WTC11 (cell line): ENCODE measurements at regions of chr5 and their contacts with region 1.

Region 1: DNA sequence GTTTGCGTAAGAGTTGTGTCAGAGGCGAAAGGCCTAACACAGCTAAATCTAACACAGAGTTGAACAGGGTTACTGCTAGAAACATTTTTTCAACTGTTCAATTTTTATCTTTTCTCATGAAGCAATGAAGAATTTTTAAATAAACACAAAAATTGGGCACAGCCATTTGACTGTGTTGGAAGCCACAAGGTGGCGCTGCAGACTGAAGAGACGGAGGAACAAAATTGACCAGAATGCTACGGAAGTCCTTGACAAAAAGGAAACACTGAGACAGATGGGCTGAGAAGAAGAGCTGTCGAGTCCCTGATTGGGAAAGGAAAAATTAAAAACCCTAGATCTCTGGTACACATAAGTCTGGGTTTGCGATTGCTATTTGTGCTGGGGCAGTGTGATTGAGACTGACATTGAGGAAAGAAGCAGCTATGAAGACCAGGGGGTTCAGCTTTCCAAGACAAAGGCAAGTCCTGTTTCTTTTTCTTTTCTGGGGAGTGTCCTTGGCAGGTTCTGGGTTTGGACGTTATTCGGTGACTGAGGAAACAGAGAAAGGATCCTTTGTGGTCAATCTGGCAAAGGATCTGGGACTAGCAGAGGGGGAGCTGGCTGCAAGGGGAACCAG is at the start of gene PCDHB9:
- DNase-seq: peak; percentile 71
- ATAC-seq: peak; percentile 58
- H3K4me3 Mint-ChIP-seq: peak within 1 kb of the TSS; percentile 21
- H3K27ac Mint-ChIP-seq: no peak within 1 kb of the TSS; the same call in 1 of the 2 replicates
- H3K4me1 Mint-ChIP-seq: peaks cover 15% of the 10 kb centered on the region
- H3K27me3 Mint-ChIP-seq: peaks cover 4% of the 10 kb centered on the region; the same call in 1 of the 2 replicates
- CTCF ChIP-seq: peak; percentile 49; the same call in 1 of the 2 replicates
- total RNA-seq, gene PCDHB9: 1.6 to 2.3 TPM (median 1.7 TPM) in 3 replicates

Region 2: DNA sequence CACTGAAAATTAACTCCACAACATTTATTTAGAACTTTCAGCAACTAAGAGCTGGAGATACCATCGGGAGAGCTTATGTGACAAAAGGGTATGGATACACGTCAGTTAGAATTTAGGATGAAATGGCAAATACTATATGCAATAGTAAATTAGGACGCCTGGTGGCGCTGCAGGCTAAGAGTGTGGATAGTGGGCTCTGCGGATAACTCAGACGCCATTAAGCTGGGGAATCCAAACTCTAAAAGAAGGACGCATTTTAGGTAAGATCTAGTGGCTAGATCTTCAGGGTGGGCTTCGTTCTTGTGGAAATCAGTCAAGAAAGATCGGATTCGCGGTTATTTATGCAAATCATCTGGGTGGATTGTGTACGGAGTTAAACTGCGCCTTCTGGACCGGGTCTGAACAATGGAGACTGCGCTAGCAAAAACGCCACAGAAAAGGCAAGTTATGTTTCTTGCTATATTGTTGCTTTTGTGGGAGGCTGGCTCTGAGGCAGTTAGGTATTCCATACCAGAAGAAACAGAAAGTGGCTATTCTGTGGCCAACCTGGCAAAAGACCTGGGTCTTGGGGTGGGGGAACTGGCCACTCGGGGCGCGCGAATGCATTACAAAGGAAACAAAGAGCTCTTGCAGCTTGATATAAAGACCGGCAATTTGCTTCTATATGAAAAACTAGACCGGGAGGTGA is 51.8 kb before region 1 on chr5 and contains the start of gene PCDHB5:
- CTCF ChIA-PET with region 1: interaction called, 30 read pairs
- POLR2A ChIA-PET with region 1: no interaction called
- DNase-seq: peak; percentile 72
- ATAC-seq: peak; percentile 89
- H3K4me3 Mint-ChIP-seq: peak within 1 kb of the TSS; percentile 74
- H3K27ac Mint-ChIP-seq: peak within 1 kb of the TSS; percentile 64; the same call in 1 of the 2 replicates
- H3K4me1 Mint-ChIP-seq: peaks cover 4% of the 10 kb centered on the region; the same call in 1 of the 2 replicates
- H3K27me3 Mint-ChIP-seq: no peaks in the 10 kb centered on the region
- CTCF ChIP-seq: peak; percentile 72
- total RNA-seq, gene PCDHB5: 6.8 to 12.5 TPM (median 8.5 TPM) in 3 replicates

Region 3: DNA sequence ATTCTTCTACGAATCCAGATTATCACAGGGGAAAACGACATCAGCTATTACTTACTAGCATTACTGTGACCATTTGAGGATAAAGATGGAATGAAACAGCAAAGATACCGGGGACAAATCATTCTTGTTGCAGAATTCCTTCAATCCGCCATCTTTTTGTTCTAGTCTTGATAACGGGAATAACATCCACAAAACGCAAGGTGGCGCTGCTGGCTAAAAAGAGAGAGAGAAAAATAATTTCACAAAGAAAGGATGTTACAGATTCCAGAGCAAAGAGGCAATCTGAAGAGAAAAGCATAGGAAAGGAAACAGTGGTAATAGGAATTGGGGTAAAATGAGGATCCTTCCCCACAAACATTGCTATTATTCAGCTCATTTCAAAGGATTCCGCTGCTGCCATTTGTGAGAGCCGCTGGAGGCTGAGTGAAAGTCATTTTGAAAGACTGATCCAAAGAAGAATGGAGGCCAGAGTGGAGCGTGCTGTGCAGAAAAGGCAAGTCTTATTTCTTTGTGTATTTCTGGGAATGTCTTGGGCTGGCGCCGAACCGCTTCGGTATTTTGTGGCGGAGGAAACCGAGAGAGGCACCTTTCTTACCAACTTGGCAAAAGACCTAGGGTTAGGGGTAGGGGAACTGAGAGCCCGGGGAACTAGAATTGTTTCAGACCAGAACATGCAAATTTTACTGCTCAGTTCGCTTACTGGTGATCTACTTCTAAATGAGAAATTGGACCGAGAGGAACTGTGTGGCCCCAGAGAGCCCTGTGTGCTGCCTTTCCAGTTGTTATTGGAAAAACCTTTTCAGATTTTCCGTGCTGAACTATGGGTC is 14.4 kb before region 1 on chr5 and contains the start of gene PCDHB7:
- CTCF ChIA-PET with region 1: interaction called, 12 read pairs
- POLR2A ChIA-PET with region 1: no interaction called
- DNase-seq: peak; percentile 57
- ATAC-seq: no peak
- H3K4me3 Mint-ChIP-seq: no peak within 1 kb of the TSS
- H3K27ac Mint-ChIP-seq: no peak within 1 kb of the TSS
- H3K4me1 Mint-ChIP-seq: no peaks in the 10 kb centered on the region
- H3K27me3 Mint-ChIP-seq: peaks cover 3% of the 10 kb centered on the region; the same call in 1 of the 2 replicates
- CTCF ChIP-seq: peak; percentile 66
- total RNA-seq, gene PCDHB7: 0.17 to 0.27 TPM (median 0.23 TPM) in 3 replicates

Region 4: GRCh38 chr5:141199359-141200235 is 12.6 kb after region 1 on chr5 and contains the start of gene PCDHB11:
- CTCF ChIA-PET with region 1: interaction called, 29 read pairs
- POLR2A ChIA-PET with region 1: no interaction called
- DNase-seq: no peak
- ATAC-seq: peak; percentile 67
- H3K4me3 Mint-ChIP-seq: peak within 1 kb of the TSS; percentile 24
- H3K27ac Mint-ChIP-seq: no peak within 1 kb of the TSS
- H3K4me1 Mint-ChIP-seq: peaks cover 7% of the 10 kb centered on the region
- H3K27me3 Mint-ChIP-seq: no peaks in the 10 kb centered on the region; the same call in 1 of the 2 replicates
- CTCF ChIP-seq: peak; percentile 32; the same call in 1 of the 2 replicates
- total RNA-seq, gene PCDHB11: 0.61 to 1.2 TPM (median 0.92 TPM) in 3 replicates

Region 5: DNA sequence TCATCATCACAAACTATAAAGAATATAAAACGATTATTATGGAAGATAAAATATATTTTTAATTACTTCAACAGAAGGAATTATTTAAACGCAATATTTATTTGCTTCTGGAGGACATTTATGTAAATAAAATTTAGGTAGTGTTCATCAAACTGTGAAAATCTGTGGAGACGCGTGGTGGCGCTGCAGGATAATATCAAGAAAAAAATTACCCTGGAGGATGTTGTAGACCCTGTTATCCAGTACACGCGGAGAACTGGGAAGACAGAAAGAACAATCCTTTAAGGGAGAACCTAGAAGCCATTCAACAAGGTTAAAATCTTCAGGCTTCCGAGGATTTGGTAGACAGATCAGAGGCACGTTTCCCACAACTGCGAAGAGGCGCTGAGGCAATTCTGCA is 21.5 kb after region 1 on chr5 and contains the start of gene PCDHB12:
- CTCF ChIA-PET with region 1: interaction called, 16 read pairs
- POLR2A ChIA-PET with region 1: no interaction called
- DNase-seq: peak; percentile 54
- ATAC-seq: peak; percentile 73
- H3K4me3 Mint-ChIP-seq: peak within 1 kb of the TSS; percentile 72
- H3K27ac Mint-ChIP-seq: no peak within 1 kb of the TSS
- H3K4me1 Mint-ChIP-seq: peaks cover 4% of the 10 kb centered on the region
- H3K27me3 Mint-ChIP-seq: peaks cover 3% of the 10 kb centered on the region
- CTCF ChIP-seq: 0 out of 2 replicates have a peak, but pooled peaks have one; percentile 27
- total RNA-seq, gene PCDHB12: 2.7 to 3.1 TPM (median 3.1 TPM) in 3 replicates

Region 6: GRCh38 chr5:141320225-141321169 is 133.5 kb after region 1 on chr5 and contains the start of gene TAF7:
- CTCF ChIA-PET with region 1: interaction called, 11 read pairs
- POLR2A ChIA-PET with region 1: no interaction called
- DNase-seq: peak; percentile 95
- ATAC-seq: peak; percentile 94
- H3K4me3 Mint-ChIP-seq: peak within 1 kb of the TSS; percentile 99
- H3K27ac Mint-ChIP-seq: peak within 1 kb of the TSS; percentile 99
- H3K4me1 Mint-ChIP-seq: peaks cover 24% of the 10 kb centered on the region
- H3K27me3 Mint-ChIP-seq: peaks cover 24% of the 10 kb centered on the region
- CTCF ChIP-seq: peak; percentile 85
- total RNA-seq, gene TAF7: 87.8 to 96.2 TPM (median 90.1 TPM) in 3 replicates